Mammary epithelial cell (primary cell): ENCODE measurements at regions of chr5 and their contacts with region 1.

Region 1: GRCh38 chr5:91280362-91281269 is 102.5 kb downstream of the ARRDC3 start:
- DNase-seq: peak; percentile 96
- H3K4me3 ChIP-seq: peak overlapping the region; percentile 47 to 66 (median 59)
- H3K27ac ChIP-seq: peak overlapping the region; percentile 98
- H3K4me1 ChIP-seq: peaks cover 31% of the 10 kb centered on the region
- H3K27me3 ChIP-seq: no peaks in the 10 kb centered on the region
- CTCF ChIP-seq: no peak

Region 2: GRCh38 chr5:91311697-91312501 is 31.3 kb after region 1 on chr5:
- CTCF ChIA-PET with region 1: no interaction called
- dilution Hi-C with region 1: no loop called
- in situ Hi-C with region 1: no loop called
- intact Hi-C with region 1: loop called (anchors 1 kb)
- DNase-seq: peak; percentile 97
- H3K4me3 ChIP-seq: no peak overlapping the region
- H3K27ac ChIP-seq: peak overlapping the region; percentile 91
- H3K4me1 ChIP-seq: peaks cover 45% of the 10 kb centered on the region
- H3K27me3 ChIP-seq: no peaks in the 10 kb centered on the region
- CTCF ChIP-seq: no peak